Mammary epithelial cell (primary cell): ENCODE measurements at regions of chr20 and their contacts with region 1.

Region 1: DNA sequence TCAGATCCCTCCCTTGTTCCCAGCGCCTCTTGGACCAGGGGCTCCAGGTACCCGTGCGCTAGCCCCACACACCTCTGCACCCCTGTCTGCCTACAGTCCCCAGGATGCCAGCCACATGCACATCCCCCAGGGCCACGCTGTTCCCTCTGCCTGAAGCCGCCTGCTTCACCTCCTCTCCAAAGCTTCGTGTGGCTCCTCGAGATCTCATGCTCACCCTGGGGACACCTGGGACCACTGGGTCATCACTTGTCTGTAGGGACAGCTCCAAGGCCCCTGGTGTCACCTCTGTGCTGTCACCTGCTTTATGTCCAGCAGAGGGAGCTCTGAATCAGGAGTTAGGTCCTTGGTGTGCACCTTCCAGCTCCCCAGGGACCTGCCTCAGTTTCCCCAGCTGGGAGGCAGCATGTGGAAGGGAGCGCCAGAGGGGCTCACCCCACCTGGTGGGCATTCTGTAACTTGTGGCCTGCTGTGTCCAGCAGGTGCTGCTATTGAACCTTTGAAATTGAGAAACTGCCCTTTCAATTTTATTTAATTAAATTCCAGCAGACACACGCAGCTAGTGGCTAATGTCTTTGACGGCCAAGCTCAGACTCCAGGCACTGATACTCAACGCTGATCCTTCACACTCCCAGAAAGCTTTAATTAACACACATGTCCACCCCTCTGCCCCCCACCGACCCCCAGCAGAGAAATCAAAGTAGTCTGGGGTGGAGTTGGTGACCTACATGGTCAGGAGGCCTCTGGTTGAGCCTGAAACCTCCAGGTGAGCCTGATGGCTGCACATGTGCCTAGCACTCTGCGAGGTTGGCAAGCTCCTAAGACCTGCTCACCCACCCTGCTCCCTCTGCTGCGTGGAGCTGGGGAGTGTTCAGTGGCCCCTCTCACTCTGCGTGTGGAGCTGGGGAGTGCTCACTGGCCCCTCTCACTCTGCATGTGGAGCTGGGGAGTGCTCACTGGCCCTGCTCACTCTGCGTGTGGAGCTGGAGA is 7.6 kb upstream of the YTHDF1 start:
- DNase-seq: no peak
- H3K4me3 ChIP-seq: no peak overlapping the region
- H3K27ac ChIP-seq: no peak overlapping the region
- H3K4me1 ChIP-seq: peaks cover 8% of the 10 kb centered on the region
- H3K27me3 ChIP-seq: peaks cover 2% of the 10 kb centered on the region
- CTCF ChIP-seq: peak; percentile 66 to 90

Region 2: DNA sequence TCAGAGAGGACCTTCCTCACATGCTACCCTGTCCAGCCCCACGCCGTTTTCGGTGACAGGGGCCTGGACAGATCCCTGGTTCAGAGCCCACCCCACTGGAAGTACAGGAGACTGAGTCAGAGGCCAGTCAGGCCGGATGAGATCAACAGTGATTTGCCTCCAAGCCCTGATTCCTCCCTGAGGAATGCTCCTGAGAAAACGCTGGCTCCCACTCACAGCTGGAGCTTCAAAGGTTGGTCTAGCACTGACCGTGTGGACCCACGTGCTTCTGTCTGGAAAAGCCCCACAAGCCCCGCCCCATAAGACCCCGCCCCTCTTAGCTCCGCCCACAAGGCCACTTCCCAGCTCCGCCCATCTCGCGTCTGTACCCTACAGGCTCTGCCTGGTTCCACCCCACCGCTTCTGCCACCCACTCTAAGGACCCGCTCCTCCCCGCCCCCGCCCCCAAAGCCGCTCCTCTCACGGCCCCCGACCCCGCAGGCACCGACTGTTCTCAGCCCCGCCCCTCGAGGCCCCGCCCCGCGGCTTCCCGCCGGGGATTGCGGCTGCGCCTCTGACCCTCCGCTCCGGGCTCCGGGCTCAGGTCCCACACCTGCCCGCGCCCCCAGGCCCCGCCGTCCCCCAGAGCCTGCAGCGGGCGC is 151.9 kb before region 1 on chr20:
- CTCF ChIA-PET with region 1: interaction called, 11 read pairs
- dilution Hi-C with region 1: no loop called
- in situ Hi-C with region 1: no loop called
- intact Hi-C with region 1: no loop called
- DNase-seq: peak; percentile 35
- H3K4me3 ChIP-seq: no peak overlapping the region
- H3K27ac ChIP-seq: no peak overlapping the region
- H3K4me1 ChIP-seq: no peaks in the 10 kb centered on the region
- H3K27me3 ChIP-seq: peaks cover 9% of the 10 kb centered on the region
- CTCF ChIP-seq: no peak

Region 3: GRCh38 chr20:63272584-63273579 is 49.4 kb after region 1 on chr20 and contains the start of gene ARFGAP1:
- CTCF ChIA-PET with region 1: no interaction called
- dilution Hi-C with region 1: loop called (anchors 5 kb)
- in situ Hi-C with region 1: no loop called
- intact Hi-C with region 1: no loop called
- DNase-seq: peak; percentile 73
- H3K4me3 ChIP-seq: peak within 1 kb of the TSS; percentile 91 to 97 (median 93)
- H3K27ac ChIP-seq: peak within 1 kb of the TSS; percentile 74
- H3K4me1 ChIP-seq: peaks cover 28% of the 10 kb centered on the region
- H3K27me3 ChIP-seq: no peaks in the 10 kb centered on the region
- CTCF ChIP-seq: no peak
- total RNA-seq, gene ARFGAP1: 48.5 to 89.8 TPM

Region 4: DNA sequence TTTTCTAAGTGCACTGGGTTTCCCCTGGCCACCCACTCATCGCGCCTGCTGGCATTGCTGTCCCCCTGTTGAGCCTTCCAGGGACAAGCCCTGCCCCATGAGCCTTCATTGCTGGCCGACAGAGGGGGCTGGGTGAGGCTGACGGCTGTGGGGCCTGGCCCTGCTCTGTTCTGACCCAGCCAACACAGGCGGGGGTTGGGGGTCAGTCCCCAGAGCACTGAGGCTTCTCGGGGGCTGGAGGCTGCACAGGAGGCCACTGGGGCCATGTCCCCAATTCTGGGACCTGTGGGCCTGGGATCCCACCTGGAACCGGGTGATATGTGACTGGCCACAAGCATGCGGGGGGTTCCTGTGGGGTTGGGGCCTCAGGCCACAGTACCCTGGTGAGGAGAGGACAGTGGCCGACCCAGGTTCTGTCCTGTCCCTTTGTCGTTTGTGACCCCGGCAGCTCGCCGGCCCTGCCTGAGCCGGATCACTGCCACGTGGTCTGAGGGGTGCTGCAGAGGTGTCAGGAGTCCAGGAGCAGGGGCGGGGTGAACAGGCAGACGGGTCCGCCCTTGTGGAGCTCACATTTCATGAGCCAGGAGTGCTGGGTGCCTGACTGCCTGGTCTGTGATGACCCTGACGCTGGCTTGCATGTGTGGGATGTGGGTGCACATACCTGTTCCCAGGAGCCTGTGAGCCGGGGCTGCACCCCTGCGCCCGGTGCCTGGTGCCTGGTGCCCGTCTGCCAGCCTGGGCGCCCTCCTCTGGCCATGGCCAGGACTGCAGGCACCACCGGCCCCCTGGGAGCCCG is 67.4 kb after region 1 on chr20:
- CTCF ChIA-PET with region 1: no interaction called
- dilution Hi-C with region 1: no loop called
- in situ Hi-C with region 1: no loop called
- intact Hi-C with region 1: loop called (anchors 5 kb)
- DNase-seq: peak; percentile 31
- H3K4me3 ChIP-seq: no peak overlapping the region
- H3K27ac ChIP-seq: no peak overlapping the region
- H3K4me1 ChIP-seq: peaks cover 5% of the 10 kb centered on the region
- H3K27me3 ChIP-seq: peaks cover 10% of the 10 kb centered on the region
- CTCF ChIP-seq: peak; percentile 58 to 61

Region 5: DNA sequence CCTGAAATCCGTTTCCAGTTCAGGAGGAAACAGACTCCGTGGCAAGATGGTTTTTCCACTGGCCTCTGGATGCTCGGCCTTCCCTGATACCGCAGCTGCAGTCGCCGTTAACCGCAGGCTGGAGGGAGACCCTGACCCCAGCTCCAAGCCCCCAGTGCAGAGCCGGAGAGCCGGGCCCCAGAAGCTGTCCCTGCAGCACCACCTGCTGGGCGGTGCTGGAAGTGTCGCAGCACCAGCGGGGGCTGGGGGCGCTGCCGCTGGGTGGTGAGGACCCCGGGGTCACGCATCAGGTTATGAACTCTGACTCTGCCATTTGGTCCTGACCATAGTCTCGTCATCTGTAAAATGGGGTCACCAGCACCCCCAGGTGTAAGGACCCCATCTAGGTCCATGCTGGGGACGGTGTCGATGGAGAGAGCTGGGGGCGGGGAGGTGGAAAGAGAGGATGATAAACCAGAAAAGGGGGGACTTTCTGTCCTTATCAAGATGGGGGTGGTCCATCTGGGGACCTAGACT is 158.4 kb after region 1 on chr20:
- CTCF ChIA-PET with region 1: interaction called, 12 read pairs
- dilution Hi-C with region 1: no loop called
- in situ Hi-C with region 1: no loop called
- intact Hi-C with region 1: loop called (anchors 1 kb)
- DNase-seq: no peak
- H3K4me3 ChIP-seq: no peak overlapping the region
- H3K27ac ChIP-seq: no peak overlapping the region
- H3K4me1 ChIP-seq: no peaks in the 10 kb centered on the region
- H3K27me3 ChIP-seq: peaks cover 5% of the 10 kb centered on the region
- CTCF ChIP-seq: peak; percentile 85 to 91

Region 6: GRCh38 chr20:63394069-63394919 is 170.8 kb after region 1 on chr20:
- CTCF ChIA-PET with region 1: no interaction called
- dilution Hi-C with region 1: loop called (anchors 5 kb)
- in situ Hi-C with region 1: no loop called
- intact Hi-C with region 1: no loop called
- DNase-seq: no peak
- H3K4me3 ChIP-seq: no peak overlapping the region
- H3K27ac ChIP-seq: no peak overlapping the region
- H3K4me1 ChIP-seq: no peaks in the 10 kb centered on the region
- H3K27me3 ChIP-seq: peaks cover 4% of the 10 kb centered on the region
- CTCF ChIP-seq: no peak

Region 7: GRCh38 chr20:63508072-63508768 is 284.7 kb after region 1 on chr20:
- CTCF ChIA-PET with region 1: no interaction called
- dilution Hi-C with region 1: loop called (anchors 5 kb)
- in situ Hi-C with region 1: no loop called
- intact Hi-C with region 1: no loop called
- DNase-seq: no peak
- H3K4me3 ChIP-seq: no peak overlapping the region
- H3K27ac ChIP-seq: no peak overlapping the region
- H3K4me1 ChIP-seq: no peaks in the 10 kb centered on the region
- H3K27me3 ChIP-seq: peaks cover 2% of the 10 kb centered on the region
- CTCF ChIP-seq: no peak